ENCODE measurements at regions of chr1 and their contacts with region 1.

Region 1: DNA sequence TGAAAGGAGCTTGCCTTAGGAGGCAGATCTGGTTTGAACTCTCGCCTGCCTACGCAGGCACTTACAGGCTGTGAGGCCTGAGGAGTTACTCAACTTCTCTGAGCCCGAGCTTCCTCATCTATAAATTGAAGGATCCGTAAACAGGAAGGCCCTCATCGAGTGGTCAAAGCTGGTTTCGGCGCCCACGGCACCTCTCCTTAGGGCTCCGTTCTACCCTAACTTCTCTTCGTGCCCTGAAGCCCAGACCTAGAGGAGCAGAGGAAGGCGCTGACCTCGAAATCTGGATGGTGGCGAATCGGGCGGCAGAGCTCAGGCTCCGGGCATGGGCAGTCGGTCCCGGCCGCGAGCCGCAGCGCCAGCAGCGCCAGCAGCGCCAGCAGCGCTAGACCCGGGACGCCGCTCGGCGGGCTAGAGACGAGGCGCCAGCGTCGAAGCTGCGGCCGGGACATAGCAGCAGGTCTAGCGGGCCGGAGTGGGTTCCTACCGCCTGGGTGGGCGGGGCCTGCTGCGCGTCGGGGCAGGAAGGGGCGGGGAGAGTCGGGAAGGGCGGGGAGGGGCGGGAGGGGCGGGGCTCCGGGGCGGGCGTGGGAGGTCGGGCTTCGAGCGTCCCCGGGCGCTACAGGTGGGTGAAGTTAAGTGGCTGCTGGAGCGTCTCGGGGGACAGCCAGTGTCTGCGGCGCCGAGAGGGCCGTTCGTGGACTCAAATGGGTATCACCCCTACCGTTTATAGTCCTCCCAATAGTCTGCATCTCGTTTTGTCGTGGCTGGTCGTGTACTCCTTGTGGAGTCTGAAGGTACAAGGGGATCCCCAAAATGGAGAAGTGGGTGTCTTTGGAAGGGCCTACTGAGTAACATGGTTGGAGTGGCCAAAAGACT is at the start of gene CTBS:
- DNase-seq: peak; percentile 86
- H3K4me3 Mint-ChIP-seq: peak within 1 kb of the TSS; percentile 95
- H3K27ac Mint-ChIP-seq: peak within 1 kb of the TSS; percentile 98
- H3K4me1 Mint-ChIP-seq: peaks cover 28% of the 10 kb centered on the region
- H3K27me3 Mint-ChIP-seq: no peaks in the 10 kb centered on the region
- total RNA-seq, gene CTBS: 21.1 to 21.2 TPM

Region 2: DNA sequence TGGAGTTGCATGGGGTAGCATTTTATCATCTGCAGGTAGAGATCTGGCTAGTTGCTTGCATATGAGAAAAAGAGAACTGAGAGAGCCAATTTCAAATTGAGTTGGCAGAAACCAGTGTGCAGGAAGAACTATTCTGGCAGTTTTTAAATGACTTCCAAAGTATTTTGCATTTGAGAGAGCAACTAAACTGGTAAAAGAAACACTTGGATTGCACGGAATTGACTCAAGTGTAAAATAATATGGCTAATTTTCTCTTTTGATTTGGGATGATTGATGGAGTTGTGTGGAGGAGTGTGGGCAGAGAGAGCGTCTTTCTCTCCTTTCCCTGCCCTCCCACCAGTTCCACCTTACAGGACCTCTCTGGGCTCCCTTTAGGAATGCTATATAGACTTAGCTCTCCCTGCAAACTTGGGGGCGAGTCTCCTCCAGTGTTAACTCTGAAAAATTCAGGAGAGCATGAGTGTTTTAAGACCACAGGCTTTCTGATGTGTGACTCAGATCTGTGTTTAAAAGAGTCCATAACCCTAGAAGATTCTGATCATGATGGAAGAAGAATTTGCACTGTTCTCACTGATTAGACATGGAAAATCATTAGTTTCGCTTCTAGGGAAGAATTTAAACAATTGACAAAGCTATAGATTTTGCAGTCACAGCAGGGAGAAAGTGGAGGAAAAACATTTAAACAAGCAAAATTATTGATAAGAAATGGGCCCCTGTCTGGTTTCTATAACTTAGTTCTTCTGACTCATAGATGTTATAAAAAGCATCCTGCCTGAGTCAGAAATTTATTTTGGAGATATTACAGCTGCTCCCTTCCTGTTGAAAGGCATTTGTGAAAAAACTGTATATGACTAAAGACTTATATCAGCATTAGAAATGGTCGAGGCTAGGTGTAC is 24.9 kb after region 1 on chr1:
- CTCF ChIA-PET with region 1: no interaction called
- intact Hi-C with region 1: loop called (anchors 1 kb)
- DNase-seq: no peak
- H3K4me3 Mint-ChIP-seq: no peak overlapping the region
- H3K27ac Mint-ChIP-seq: peak overlapping the region; percentile 70
- H3K4me1 Mint-ChIP-seq: peaks cover 31% of the 10 kb centered on the region
- H3K27me3 Mint-ChIP-seq: no peaks in the 10 kb centered on the region

Region 3: DNA sequence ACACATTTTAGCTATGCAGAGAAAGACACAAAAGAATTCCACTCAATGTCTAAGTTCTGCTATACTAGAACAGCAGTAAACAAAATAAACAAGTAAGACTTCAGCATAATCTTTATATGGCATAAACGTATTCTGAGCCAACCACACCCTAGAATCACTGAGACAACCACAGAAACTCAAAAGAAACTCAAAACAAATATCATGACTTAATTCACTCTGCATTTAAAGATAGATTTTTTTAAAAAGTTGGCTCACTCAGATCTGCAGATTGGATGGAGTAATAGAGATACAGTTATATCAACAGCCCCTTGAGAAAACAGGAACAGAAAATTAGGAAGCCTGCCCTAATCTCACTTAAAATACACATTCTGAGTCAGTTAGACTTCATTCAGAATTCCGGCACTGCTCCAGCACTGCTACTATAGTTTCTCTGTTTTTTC is 1487.4 kb after region 1 on chr1:
- CTCF ChIA-PET with region 1: no interaction called
- intact Hi-C with region 1: no loop called
- DNase-seq: no peak
- H3K4me3 Mint-ChIP-seq: no peak overlapping the region
- H3K27ac Mint-ChIP-seq: no peak overlapping the region
- H3K4me1 Mint-ChIP-seq: no peaks in the 10 kb centered on the region
- H3K27me3 Mint-ChIP-seq: peaks cover 2% of the 10 kb centered on the region